ENCODE measurements at regions of chr15 and their contacts with region 1.

Region 1: GRCh38 chr15:29674661-29675533 is 147.4 kb downstream of the TJP1 start:
- DNase-seq: peak; percentile 23
- ATAC-seq: peak; percentile 80
- H3K4me3 ChIP-seq: peak overlapping the region; percentile 76
- H3K27ac ChIP-seq: peak overlapping the region; percentile 31; the same call in 1 of the 2 replicates
- H3K4me1 ChIP-seq: peaks cover 17% of the 10 kb centered on the region
- H3K27me3 ChIP-seq: no peaks in the 10 kb centered on the region
- CTCF ChIP-seq: no peak
- POLR2A ChIP-seq: no peak
- RAD21 ChIP-seq: no peak

Region 2: DNA sequence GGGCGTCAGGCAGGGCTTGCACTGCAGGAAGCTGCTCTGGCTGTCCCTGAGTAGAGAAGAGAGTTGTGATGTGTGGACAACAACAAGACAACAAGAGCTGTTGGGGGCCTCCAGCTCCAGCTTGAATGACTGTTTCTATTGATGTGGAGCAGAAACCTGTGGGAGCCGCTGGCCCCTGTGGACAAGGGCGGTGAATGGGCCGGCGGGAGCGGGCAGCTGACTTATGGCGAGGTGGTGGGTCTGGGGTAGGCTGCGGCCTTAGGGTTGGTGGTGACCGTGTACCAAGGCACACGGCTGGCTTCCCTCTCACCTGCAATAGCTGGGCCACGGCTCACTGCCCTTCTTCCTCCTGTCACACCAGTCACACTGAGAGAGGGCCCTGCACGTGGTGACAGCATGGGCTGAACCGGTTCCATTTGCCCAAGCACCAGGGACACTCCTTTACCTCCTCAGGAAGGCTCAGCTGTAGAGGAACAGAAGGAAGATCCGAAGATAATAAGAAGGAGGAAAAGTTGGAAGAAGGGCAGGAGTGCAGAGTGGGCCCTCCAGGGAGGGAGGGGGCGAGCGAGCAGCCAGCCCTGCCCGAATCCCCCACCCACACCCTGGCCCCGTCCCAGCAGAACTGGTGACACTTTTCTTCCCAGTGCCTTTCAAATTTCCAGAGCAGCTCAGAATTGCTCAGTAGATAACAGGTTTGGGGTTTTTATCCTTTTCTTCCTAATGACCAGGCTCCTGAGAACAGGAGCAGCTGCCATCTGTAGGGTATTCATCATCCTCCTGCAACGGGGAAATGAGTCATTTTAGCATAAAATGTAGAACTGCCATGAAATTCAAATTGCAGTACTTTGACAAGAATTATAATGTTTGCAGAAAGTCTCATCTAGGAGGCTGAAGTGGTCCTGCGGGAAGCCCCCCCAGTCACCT is 10.5 kb after region 1 on chr15:
- CTCF ChIA-PET with region 1: no interaction called
- POLR2A ChIA-PET with region 1: no interaction called
- dilution Hi-C with region 1: no loop called
- in situ Hi-C with region 1: no loop called
- intact Hi-C with region 1: no loop called
- DNase-seq: peak; percentile 79
- ATAC-seq: peak; percentile 76
- H3K4me3 ChIP-seq: no peak overlapping the region
- H3K27ac ChIP-seq: no peak overlapping the region
- H3K4me1 ChIP-seq: 0 out of 2 replicates have a peak, but pooled peaks cover 3% of the 10 kb centered on the region
- H3K27me3 ChIP-seq: no peaks in the 10 kb centered on the region
- CTCF ChIP-seq: no peak
- POLR2A ChIP-seq: no peak
- RAD21 ChIP-seq: no peak

Region 3: GRCh38 chr15:29935276-29936020 is 260.6 kb after region 1 on chr15:
- CTCF ChIA-PET with region 1: no interaction called
- POLR2A ChIA-PET with region 1: no interaction called
- dilution Hi-C with region 1: no loop called
- in situ Hi-C with region 1: loop called (anchors 10 kb)
- intact Hi-C with region 1: no loop called
- DNase-seq: no peak
- ATAC-seq: no peak
- H3K4me3 ChIP-seq: no peak overlapping the region
- H3K27ac ChIP-seq: no peak overlapping the region
- H3K4me1 ChIP-seq: peaks cover 16% of the 10 kb centered on the region
- H3K27me3 ChIP-seq: no peaks in the 10 kb centered on the region
- CTCF ChIP-seq: 0 out of 2 replicates have a peak, but pooled peaks have one; percentile 15
- POLR2A ChIP-seq: no peak
- RAD21 ChIP-seq: peak; percentile 25; the same call in 1 of the 2 replicates